Ascending aorta (tissue), 2 donors: ENCODE measurements at regions of chr1 and their contacts with region 1.

Region 1: GRCh38 chr1:165914136-165914798 is 86.9 kb downstream of the UCK2 start:
- DNase-seq: peak in 1 of 2 donors; percentile 84
- H3K4me3 ChIP-seq: no peak overlapping the region
- H3K27ac ChIP-seq: peak overlapping the region in 1 of 2 donors; percentile 32
- H3K4me1 ChIP-seq: peaks cover 0 to 3% of the 10 kb centered on the region in 2 donors
- H3K27me3 ChIP-seq: no peaks in the 10 kb centered on the region
- CTCF ChIP-seq: peak; percentile 86 to 91 (median 87)

Region 2: GRCh38 chr1:165392634-165393571 is 521.4 kb before region 1 on chr1:
- intact Hi-C with region 1: loop called (anchors 1 kb)
- DNase-seq: peak; percentile 70 to 92
- H3K4me3 ChIP-seq: peak overlapping the region in 1 of 2 donors; percentile 40
- H3K27ac ChIP-seq: no peak overlapping the region
- H3K4me1 ChIP-seq: no peaks in the 10 kb centered on the region
- H3K27me3 ChIP-seq: no peaks in the 10 kb centered on the region
- CTCF ChIP-seq: peak; percentile 80 to 96 (median 93)

Region 3: DNA sequence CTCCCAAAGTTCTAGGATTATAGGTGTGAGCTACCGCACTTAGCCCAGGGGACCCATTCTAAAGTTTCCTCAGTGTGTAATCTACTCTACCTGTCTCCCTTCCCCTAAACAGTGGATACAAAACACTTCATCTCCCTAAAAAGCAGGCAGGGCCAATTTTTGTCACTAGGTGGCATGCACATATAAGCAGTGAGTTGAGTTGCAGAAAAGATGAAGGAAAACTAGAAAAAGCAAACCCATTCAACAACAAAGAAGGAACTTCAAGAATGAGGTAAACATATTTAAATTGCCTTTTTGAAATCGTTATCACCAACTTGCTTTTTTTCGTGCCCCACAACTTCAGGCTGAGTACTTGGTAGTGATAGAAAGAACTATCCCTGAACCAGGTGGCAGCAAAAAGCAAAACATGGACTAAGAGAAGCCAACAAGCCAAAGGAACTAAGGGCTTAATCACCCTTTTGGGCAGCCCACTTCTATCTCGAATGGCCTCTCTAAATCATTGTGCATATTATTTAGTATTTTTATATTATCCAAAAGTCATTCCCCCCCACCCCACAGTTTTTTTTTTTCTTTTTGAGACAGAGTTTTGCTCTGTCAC is 196.2 kb before region 1 on chr1:
- intact Hi-C with region 1: loop called (anchors 2 kb)
- DNase-seq: no peak
- H3K4me3 ChIP-seq: no peak overlapping the region
- H3K27ac ChIP-seq: no peak overlapping the region
- H3K4me1 ChIP-seq: no peaks in the 10 kb centered on the region
- H3K27me3 ChIP-seq: no peaks in the 10 kb centered on the region
- CTCF ChIP-seq: peak in 2 of 3 experiments; percentile 21 to 54

Region 4: GRCh38 chr1:165898837-165899236 is 15.4 kb before region 1 on chr1:
- intact Hi-C with region 1: no loop called
- DNase-seq: peak; percentile 65 to 91
- H3K4me3 ChIP-seq: no peak overlapping the region
- H3K27ac ChIP-seq: peak overlapping the region; percentile 93 to 95
- H3K4me1 ChIP-seq: peaks cover 21 to 47% of the 10 kb centered on the region in 2 donors
- H3K27me3 ChIP-seq: no peaks in the 10 kb centered on the region
- CTCF ChIP-seq: no peak